Adrenal gland (tissue), 19 donors: ENCODE measurements at regions of chr6 and their contacts with region 1.

Region 1: GRCh38 chr6:30626484-30627366 is at the start of gene ATAT1:
- DNase-seq: peak; percentile 80 to 96 (median 88)
- H3K4me3 ChIP-seq: peak within 1 kb of the TSS in 3 of 4 donors; percentile 19 to 64 (median 62)
- H3K27ac ChIP-seq: peak within 1 kb of the TSS; percentile 16 to 91 (median 66)
- H3K4me1 ChIP-seq: peaks cover 9 to 10% of the 10 kb centered on the region in 2 donors
- H3K27me3 ChIP-seq: no peaks in the 10 kb centered on the region
- CTCF ChIP-seq: peak in 5 of 6 experiments; percentile 22 to 39 (median 35)
- POLR2A ChIP-seq: peak; percentile 29
- total RNA-seq, gene ATAT1: 0.78 to 10.1 (median 6.8) TPM

Region 2: GRCh38 chr6:30304002-30304401 is 322.7 kb before region 1 on chr6:
- intact Hi-C with region 1: no loop called
- DNase-seq: no peak
- H3K4me3 ChIP-seq: no peak overlapping the region
- H3K27ac ChIP-seq: no peak overlapping the region
- H3K4me1 ChIP-seq: no peaks in the 10 kb centered on the region
- H3K27me3 ChIP-seq: no peaks in the 10 kb centered on the region
- CTCF ChIP-seq: no peak
- POLR2A ChIP-seq: no peak

Region 3: GRCh38 chr6:30672445-30673253 is 45.9 kb after region 1 on chr6 and contains the start of gene DHX16:
- intact Hi-C with region 1: loop called in 1 of 2 experiments (anchors 5 kb)
- DNase-seq: peak; percentile 96 to 99 (median 97)
- H3K4me3 ChIP-seq: peak within 1 kb of the TSS; percentile 78 to 99 (median 90)
- H3K27ac ChIP-seq: peak within 1 kb of the TSS; percentile 37 to 88 (median 45)
- H3K4me1 ChIP-seq: peaks cover 10 to 22% of the 10 kb centered on the region in 2 donors
- H3K27me3 ChIP-seq: no peaks in the 10 kb centered on the region
- CTCF ChIP-seq: peak; percentile 76 to 93 (median 88)
- POLR2A ChIP-seq: peak in 1 of 2 donors; percentile 62
- total RNA-seq, gene DHX16: 16.4 to 39.7 (median 28.0) TPM